Aorta (tissue), 5 donors: ENCODE measurements at regions of chr3 and their contacts with region 1.

Region 1: GRCh38 chr3:104360038-104360437 is 1006.7 kb upstream of the ALCAM start:
- DNase-seq: no peak
- ATAC-seq: no peak
- H3K4me3 ChIP-seq: peak overlapping the region; percentile 20 to 26
- H3K27ac ChIP-seq: no peak overlapping the region
- H3K4me1 ChIP-seq: peaks cover 0 to 3% of the 10 kb centered on the region in 2 donors
- H3K27me3 ChIP-seq: no peaks in the 10 kb centered on the region

Region 2: DNA sequence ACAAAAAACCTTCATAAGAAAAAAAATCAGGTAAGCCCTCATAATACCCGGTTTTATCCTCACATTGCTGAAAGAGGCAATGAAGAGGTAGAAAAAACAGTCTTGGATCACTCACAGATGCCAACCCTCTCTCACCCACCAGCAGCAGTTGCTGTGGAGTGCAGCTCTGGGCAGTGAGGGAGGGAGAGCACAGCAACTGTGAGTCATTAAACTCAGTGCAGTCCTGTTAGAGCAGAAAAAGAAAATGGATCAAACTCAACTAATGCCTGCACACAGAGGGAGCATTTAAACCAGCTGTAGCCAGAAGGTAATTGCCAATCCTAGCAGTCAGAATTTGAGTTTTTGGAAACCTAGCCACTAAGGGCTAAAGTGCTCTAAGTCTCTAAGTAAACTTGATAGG is 43.9 kb before region 1 on chr3:
- intact Hi-C with region 1: no loop called
- DNase-seq: no peak
- ATAC-seq: no peak
- H3K4me3 ChIP-seq: no peak overlapping the region
- H3K27ac ChIP-seq: no peak overlapping the region
- H3K4me1 ChIP-seq: no peaks in the 10 kb centered on the region
- H3K27me3 ChIP-seq: no peaks in the 10 kb centered on the region

Region 3: GRCh38 chr3:104396974-104397669 is 37.1 kb after region 1 on chr3:
- intact Hi-C with region 1: loop called in 1 of 2 experiments (anchors 5 kb)
- DNase-seq: peak in 1 of 2 donors; percentile 42
- ATAC-seq: peak; percentile 83
- H3K4me3 ChIP-seq: no peak overlapping the region
- H3K27ac ChIP-seq: peak overlapping the region; percentile 22 to 69
- H3K4me1 ChIP-seq: peaks cover 0 to 3% of the 10 kb centered on the region in 2 donors
- H3K27me3 ChIP-seq: no peaks in the 10 kb centered on the region

Region 4: DNA sequence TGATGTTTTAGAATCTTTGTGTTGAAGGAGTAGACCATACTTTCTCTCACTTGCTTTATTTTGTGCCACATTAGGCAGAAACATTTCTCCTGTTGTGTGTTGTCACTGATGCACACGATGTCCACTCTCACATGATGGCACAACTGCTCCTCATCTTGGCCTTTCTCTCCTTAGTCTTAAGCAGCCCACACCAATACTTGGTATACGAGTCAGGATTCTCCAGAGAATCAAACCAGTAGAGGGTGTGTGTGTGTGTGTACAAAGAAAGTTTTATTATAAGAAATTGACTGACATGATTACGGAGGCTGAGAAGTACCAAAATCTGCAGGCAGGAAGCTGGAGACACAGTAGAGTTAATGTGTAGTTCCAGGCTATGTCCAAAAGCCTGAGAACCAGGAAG is 1193.8 kb after region 1 on chr3:
- intact Hi-C with region 1: no loop called
- DNase-seq: no peak
- ATAC-seq: no peak
- H3K4me3 ChIP-seq: no peak overlapping the region
- H3K27ac ChIP-seq: no peak overlapping the region
- H3K4me1 ChIP-seq: no peaks in the 10 kb centered on the region
- H3K27me3 ChIP-seq: no peaks in the 10 kb centered on the region